A673 (cell line): ENCODE measurements at regions of chr5 and their contacts with region 1.

Region 1: DNA sequence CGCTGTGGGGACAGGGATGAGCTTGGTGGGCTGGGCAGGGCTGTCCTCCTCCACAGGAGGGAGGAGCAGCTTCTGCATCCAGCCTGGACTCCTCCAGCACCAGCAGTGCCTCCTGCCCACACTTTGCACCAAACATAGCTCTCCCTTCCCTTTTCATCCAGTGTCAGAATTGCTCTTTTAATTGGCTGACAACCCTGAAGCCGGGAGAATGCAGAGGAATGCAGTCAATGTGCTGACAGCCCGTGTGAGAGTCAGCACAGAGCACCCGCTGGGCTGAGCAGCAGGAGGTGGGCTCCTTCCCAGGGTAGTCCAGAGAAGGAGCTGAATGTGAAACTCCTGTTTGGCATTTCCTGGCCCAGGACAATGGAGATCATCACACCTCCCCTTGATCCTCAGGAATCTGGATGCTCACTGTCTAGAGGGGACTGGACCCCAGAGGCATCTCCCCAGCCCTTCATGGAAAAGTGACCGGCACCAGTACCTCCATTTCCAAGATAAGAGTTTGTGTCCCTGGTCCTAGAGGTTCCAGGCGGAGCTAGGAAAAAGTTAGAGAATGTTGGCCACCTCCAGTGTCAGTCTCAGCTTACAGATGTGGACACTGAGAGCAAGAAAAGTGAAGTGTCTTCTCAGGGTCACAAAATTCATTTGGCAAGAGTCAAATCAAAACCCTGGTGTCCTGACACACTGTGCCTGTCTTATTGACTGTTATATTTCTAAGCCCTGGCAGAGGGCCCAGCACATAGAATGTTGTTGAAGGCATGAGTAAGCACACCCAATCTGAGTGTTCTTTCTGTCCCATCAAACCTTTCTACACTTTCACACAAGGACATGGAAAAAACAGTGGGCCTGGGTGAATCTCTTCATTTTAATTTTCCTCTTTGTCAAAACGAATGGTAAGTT is 202.1 kb downstream of the SNX18 start:
- DNase-seq: peak; percentile 98
- H3K4me3 ChIP-seq: peak overlapping the region; percentile 18
- H3K27ac ChIP-seq: peak overlapping the region; percentile 99
- H3K4me1 ChIP-seq: peaks cover 67% of the 10 kb centered on the region
- H3K27me3 ChIP-seq: no peaks in the 10 kb centered on the region
- CTCF ChIP-seq: no peak

Region 2: GRCh38 chr5:54243473-54244080 is 476.1 kb before region 1 on chr5:
- CTCF ChIA-PET with region 1: interaction called, 4 read pairs
- POLR2A ChIA-PET with region 1: no interaction called
- intact Hi-C with region 1: loop called (anchors 10 kb)
- DNase-seq: peak; percentile 63
- H3K4me3 ChIP-seq: no peak overlapping the region
- H3K27ac ChIP-seq: no peak overlapping the region
- H3K4me1 ChIP-seq: no peaks in the 10 kb centered on the region
- H3K27me3 ChIP-seq: no peaks in the 10 kb centered on the region
- CTCF ChIP-seq: peak; percentile 84

Region 3: DNA sequence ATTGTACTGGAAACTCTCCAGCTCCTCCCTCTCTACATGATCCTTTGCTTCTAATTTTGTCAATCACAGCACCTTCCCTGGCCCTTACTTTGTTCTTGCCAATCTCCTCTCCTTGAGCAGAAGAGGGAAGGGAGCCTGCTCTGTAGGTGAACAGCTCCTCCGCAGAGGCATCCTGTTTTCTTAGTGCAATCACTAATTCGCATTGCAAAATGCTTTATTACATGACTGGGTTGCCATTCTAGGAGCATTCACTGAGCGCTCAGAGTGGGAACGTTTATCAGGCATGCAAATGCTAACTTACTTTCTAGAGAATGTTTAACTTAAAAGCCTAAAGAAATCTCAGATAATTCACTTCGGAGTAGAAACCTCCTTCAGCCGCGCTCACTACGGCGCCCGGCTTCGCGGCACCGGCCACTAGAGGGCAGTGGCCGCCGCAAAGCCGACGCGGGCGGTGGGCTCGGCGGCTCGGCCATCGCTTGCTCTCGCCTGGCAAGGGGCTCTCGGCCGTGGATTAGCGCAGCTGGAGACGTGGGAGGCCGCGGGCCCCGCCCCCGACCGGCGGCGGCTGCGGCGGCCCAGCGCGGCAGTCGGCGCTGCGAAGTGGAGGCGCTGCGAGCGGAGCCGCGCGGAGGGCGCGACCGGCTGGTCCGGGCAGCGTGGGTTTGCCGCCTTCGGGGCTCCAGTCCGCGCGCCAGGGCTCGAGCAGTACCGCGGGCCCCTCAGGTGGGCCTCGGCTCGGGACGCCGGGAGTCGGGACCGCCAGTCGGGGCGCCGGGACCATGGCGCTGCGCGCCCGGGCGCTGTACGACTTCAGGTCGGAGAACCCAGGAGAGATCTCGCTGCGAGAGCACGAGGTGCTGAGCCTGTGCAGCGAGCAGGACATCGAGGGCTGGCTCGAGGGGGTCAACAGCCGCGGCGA is 202.2 kb before region 1 on chr5 and contains the start of gene SNX18:
- CTCF ChIA-PET with region 1: interaction called, 14 read pairs
- POLR2A ChIA-PET with region 1: interaction called, 7 read pairs
- intact Hi-C with region 1: loop called (anchors 1 kb)
- DNase-seq: peak; percentile 97
- H3K4me3 ChIP-seq: peak within 1 kb of the TSS; percentile 71
- H3K27ac ChIP-seq: peak within 1 kb of the TSS; percentile 96
- H3K4me1 ChIP-seq: peaks cover 24% of the 10 kb centered on the region
- H3K27me3 ChIP-seq: no peaks in the 10 kb centered on the region
- CTCF ChIP-seq: peak; percentile 91
- total RNA-seq, gene SNX18: 140 and 143 TPM in 2 replicates

Region 4: GRCh38 chr5:54703133-54703532 is 16.5 kb before region 1 on chr5:
- CTCF ChIA-PET with region 1: no interaction called
- POLR2A ChIA-PET with region 1: interaction called, 3 read pairs
- intact Hi-C with region 1: loop called (anchors 2 kb)
- DNase-seq: peak; percentile 83
- H3K4me3 ChIP-seq: no peak overlapping the region
- H3K27ac ChIP-seq: peak overlapping the region; percentile 69
- H3K4me1 ChIP-seq: peaks cover 52% of the 10 kb centered on the region
- H3K27me3 ChIP-seq: no peaks in the 10 kb centered on the region
- CTCF ChIP-seq: no peak

Region 5: DNA sequence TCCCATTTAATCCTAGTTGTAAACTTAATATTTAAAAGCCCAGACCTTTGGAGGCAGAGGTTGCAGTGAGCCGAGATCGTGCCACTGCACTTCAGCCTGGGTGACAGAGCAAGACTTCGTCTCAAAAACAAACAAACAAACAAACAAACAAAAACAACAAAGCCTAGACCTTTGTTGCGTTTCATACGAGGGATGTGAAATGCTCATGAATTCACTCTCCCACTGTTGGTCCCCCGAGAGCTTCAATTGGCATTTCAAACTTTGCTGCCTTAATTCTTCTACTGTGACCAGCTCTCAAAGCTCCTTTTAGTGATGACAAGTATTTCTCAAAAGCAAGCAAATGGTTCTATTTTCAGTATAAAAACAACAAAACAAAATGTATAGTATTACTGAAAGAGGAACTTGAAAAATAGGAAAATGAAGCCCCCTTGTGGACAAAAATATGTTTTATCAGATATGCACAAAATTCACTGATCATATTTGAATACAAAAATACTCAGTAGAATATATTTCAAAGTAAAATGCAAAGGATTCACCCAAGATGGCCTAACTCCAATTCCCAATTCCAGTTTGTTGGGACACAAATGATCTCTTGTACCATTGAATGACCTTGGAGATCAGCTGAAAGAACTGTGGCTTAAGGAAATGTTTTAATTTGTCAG is 125.4 kb after region 1 on chr5:
- CTCF ChIA-PET with region 1: interaction called, 4 read pairs
- POLR2A ChIA-PET with region 1: interaction called, 3 read pairs
- intact Hi-C with region 1: loop called (anchors 1 kb)
- DNase-seq: peak; percentile 83
- H3K4me3 ChIP-seq: peak overlapping the region; percentile 25
- H3K27ac ChIP-seq: peak overlapping the region; percentile 82
- H3K4me1 ChIP-seq: peaks cover 66% of the 10 kb centered on the region
- H3K27me3 ChIP-seq: no peaks in the 10 kb centered on the region
- CTCF ChIP-seq: peak; percentile 76